ENCODE measurements at regions of chr2 and their contacts with region 1.

Region 1: DNA sequence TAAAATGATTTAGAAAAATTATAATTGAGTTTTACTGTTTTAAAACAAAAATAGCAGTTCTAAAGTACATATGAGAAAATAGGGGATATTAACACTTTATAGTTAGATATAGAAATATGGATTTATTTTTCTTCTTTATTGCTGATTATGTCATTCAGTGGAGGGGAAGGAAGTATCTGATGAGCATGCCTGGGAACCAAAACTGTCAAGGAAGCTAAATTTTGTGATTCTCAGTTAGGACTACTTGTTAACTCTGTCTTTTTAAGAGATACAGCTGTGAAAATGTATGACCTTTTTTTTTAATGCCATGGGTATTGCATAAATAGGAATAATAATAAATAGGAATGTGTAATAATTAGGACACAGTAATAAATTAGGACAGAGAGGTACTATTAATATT is 44.8 kb downstream of the ITGAV start:
- DNase-seq: no peak
- H3K4me3 ChIP-seq: no peak overlapping the region
- H3K27ac ChIP-seq: no peak overlapping the region
- H3K4me1 ChIP-seq: no peaks in the 10 kb centered on the region
- H3K27me3 ChIP-seq: no peaks in the 10 kb centered on the region
- CTCF ChIP-seq: no peak
- EP300 ChIP-seq: no peak
- POLR2A ChIP-seq: no peak

Region 2: DNA sequence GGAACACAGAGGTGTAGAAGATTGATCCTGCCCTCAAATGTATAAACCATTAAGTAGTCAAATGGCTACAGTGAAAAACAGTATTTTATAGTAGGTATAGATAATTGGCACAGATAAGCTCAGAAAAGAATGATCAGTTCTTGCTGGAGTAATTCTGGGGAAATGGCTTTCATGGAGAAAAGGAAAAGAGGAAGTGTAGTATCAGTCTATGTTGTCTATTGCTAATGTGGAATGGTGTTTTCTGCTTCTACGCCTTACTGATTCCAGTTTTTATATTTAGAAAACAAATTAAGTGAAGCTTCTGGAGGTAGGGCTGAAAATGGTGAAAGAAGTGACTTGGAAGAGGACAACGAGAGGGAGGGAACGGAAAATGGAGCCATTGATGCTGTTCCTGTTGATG is 126.4 kb before region 1 on chr2:
- in situ Hi-C with region 1: no loop called
- intact Hi-C with region 1: no loop called
- DNase-seq: no peak
- H3K4me3 ChIP-seq: no peak overlapping the region
- H3K27ac ChIP-seq: no peak overlapping the region
- H3K4me1 ChIP-seq: no peaks in the 10 kb centered on the region
- H3K27me3 ChIP-seq: no peaks in the 10 kb centered on the region
- CTCF ChIP-seq: no peak
- EP300 ChIP-seq: no peak
- POLR2A ChIP-seq: no peak

Region 3: GRCh38 chr2:186554850-186555735 is 79.6 kb before region 1 on chr2:
- in situ Hi-C with region 1: no loop called
- intact Hi-C with region 1: loop called (anchors 1 kb)
- DNase-seq: no peak
- H3K4me3 ChIP-seq: no peak overlapping the region
- H3K27ac ChIP-seq: no peak overlapping the region
- H3K4me1 ChIP-seq: no peaks in the 10 kb centered on the region
- H3K27me3 ChIP-seq: no peaks in the 10 kb centered on the region
- CTCF ChIP-seq: no peak
- EP300 ChIP-seq: no peak
- POLR2A ChIP-seq: no peak